H1 (cell line): ENCODE measurements at regions of chr11 and their contacts with region 1.

Region 1: GRCh38 chr11:96054870-96055705 is 131.2 kb upstream of the MTMR2 start:
- DNase-seq: no peak
- H3K4me3 ChIP-seq: peak overlapping the region in 1 of 4 experiments; percentile 3; a peak in 1 of 8 replicates
- H3K27ac ChIP-seq: no peak overlapping the region
- H3K4me1 ChIP-seq: peaks cover 5 to 6% (median 6%) of the 10 kb centered on the region in 4 experiments; a peak in 5 of 7 replicates
- H3K27me3 ChIP-seq: no peaks in the 10 kb centered on the region
- CTCF ChIP-seq: peak in 2 of 3 experiments; percentile 24 to 48; a peak in 2 of 4 replicates
- EP300 ChIP-seq: no peak
- POLR2A ChIP-seq: no peak
- RAD21 ChIP-seq: peak; percentile 67 to 69

Region 2: GRCh38 chr11:96065379-96065778 is 10.3 kb after region 1 on chr11:
- CTCF ChIA-PET with region 1: interaction called, 30 read pairs
- POLR2A ChIA-PET with region 1: no interaction called
- DNase-seq: no peak
- H3K4me3 ChIP-seq: no peak overlapping the region
- H3K27ac ChIP-seq: no peak overlapping the region
- H3K4me1 ChIP-seq: no peaks in the 10 kb centered on the region
- H3K27me3 ChIP-seq: peaks cover 0 to 1% (median 0%) of the 10 kb centered on the region in 4 experiments; a peak in 1 of 7 replicates
- CTCF ChIP-seq: no peak
- EP300 ChIP-seq: no peak
- POLR2A ChIP-seq: no peak
- RAD21 ChIP-seq: no peak

Region 3: DNA sequence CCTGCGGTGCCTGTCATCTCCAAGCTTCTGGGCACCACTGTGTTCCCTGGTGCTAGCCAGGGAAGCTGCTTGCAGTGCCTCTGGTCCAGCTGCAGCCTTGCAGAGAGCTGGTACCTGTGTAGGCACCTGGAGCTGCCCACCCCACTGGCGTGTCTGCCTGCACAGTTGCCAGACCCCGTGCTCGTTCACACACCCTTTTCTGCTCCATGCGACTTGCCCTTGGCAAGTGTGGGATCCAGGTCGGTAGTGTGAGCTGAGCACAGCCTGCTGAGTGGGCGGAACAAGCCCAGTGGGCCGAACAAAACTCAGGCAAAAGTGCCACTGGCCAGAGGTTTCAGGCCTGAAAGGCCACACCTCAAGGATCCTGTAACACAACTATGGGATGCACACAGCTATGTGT is 15.4 kb after region 1 on chr11:
- CTCF ChIA-PET with region 1: interaction called, 30 read pairs
- POLR2A ChIA-PET with region 1: interaction called, 4 read pairs
- DNase-seq: no peak
- H3K4me3 ChIP-seq: no peak overlapping the region
- H3K27ac ChIP-seq: no peak overlapping the region
- H3K4me1 ChIP-seq: no peaks in the 10 kb centered on the region; a peak in 1 of 7 replicates
- H3K27me3 ChIP-seq: no peaks in the 10 kb centered on the region
- CTCF ChIP-seq: no peak
- EP300 ChIP-seq: no peak
- POLR2A ChIP-seq: no peak
- RAD21 ChIP-seq: no peak

Region 4: DNA sequence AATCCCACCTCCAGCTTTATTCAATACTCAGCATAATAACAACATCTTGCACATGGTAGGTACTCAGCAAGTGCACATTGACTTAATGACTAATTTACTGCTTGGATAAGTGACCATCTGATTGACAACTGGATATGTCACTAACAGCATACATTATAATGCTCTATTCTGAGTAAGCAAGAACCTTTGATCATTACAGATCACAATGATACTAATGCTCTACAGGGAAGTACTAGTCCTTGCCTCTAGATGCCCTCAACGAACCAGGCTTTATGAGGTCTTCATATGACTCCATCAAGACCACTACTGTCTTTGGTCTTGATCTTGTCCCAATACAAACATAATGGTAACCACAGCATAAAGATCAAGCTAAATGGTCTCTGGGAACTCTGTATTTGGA is 36.4 kb after region 1 on chr11:
- CTCF ChIA-PET with region 1: interaction called, 10 read pairs
- POLR2A ChIA-PET with region 1: no interaction called
- DNase-seq: no peak
- H3K4me3 ChIP-seq: no peak overlapping the region
- H3K27ac ChIP-seq: no peak overlapping the region
- H3K4me1 ChIP-seq: peaks cover 0 to 4% (median 1%) of the 10 kb centered on the region in 4 experiments; a peak in 4 of 7 replicates
- H3K27me3 ChIP-seq: no peaks in the 10 kb centered on the region
- CTCF ChIP-seq: peak in 2 of 3 experiments; percentile 19 to 22; a peak in 1 of 4 replicates
- EP300 ChIP-seq: no peak
- POLR2A ChIP-seq: no peak
- RAD21 ChIP-seq: peak; percentile 59